ENCODE measurements at regions of chr6 and their contacts with region 1.

Region 1: GRCh38 chr6:68634726-68635411 is at the start of gene ADGRB3:
- DNase-seq: peak; percentile 80 to 94
- ATAC-seq: peak; percentile 94
- H3K4me3 ChIP-seq: peak within 1 kb of the TSS; percentile 59 to 84
- H3K27ac ChIP-seq: no peak within 1 kb of the TSS
- H3K4me1 ChIP-seq: no peaks in the 10 kb centered on the region
- H3K27me3 ChIP-seq: no peaks in the 10 kb centered on the region
- total RNA-seq, gene ADGRB3: 5.4 to 6.1 TPM

Region 2: DNA sequence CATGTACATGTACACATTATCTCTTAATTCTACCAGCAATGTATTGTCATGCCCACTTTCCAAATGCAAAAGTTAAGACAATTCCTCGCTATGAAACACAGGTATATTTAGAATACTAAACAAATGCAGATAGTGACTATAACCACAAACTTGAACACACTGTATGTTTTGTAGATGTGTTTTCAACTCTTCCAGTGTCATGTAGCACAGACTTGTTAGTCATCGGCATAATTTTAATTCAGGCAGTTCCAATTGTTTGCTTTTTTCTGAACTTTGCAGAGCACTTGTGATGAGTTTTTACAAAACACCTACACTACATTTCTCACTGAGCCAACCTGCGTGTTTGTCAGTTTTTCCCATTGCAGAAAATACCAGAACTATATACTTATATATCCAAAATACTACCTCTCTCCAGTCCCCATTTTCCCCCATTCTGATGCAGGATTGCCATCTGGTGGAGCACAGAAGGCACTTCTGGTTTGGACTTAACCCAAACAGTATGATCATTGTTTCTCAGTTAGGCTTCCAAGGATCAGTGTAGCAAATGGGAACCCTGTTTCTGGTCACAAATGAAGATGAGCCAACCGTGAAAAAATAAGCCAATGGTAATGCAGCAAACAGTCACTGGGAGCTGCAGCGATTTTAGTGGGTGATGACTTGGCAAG is 143.6 kb after region 1 on chr6:
- intact Hi-C with region 1: loop called (anchors 2 kb)
- DNase-seq: no peak
- ATAC-seq: peak; percentile 81
- H3K4me3 ChIP-seq: no peak overlapping the region
- H3K27ac ChIP-seq: no peak overlapping the region
- H3K4me1 ChIP-seq: no peaks in the 10 kb centered on the region
- H3K27me3 ChIP-seq: no peaks in the 10 kb centered on the region

Region 3: DNA sequence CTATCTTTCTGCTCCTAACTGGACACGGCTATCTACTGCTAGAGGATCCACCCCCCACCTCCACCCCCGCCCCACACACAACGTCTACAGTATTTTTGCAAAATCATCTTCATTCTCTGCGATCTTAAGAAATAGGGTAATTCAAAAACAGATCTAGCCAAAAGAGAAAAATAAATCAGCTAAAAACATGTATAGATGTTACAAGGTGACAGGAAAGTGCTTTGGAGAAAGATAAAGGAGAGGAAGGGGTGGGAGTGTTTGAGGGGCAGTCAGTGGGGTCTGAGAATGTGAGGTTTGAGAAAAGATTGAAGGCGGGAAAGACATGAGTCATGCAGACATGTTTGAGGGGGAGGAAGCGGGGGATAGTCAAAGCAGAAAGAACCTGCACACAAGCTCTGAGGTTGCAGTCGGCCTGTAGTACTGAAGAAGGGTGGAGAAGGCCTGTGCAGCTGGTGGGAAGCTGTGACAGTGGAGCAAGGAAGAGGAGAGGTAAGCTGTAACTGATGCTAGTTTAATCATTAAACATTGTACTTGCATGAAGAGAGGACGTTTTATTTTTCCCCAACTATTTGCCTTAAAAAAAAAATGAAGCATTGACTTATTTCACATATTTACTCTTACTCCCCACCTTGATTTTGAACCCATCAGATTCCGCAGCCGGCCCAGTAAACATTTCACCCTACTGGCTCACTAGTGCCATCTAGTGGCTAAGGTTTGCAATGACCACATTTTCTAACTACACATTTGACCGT is 332.9 kb after region 1 on chr6:
- intact Hi-C with region 1: loop called in 1 of 2 experiments (anchors 5 kb)
- DNase-seq: peak; percentile 49 to 75
- ATAC-seq: peak; percentile 64
- H3K4me3 ChIP-seq: no peak overlapping the region
- H3K27ac ChIP-seq: no peak overlapping the region
- H3K4me1 ChIP-seq: no peaks in the 10 kb centered on the region
- H3K27me3 ChIP-seq: no peaks in the 10 kb centered on the region

Measured in aorta (tissue), 5 donors.